ENCODE measurements at regions of chr14 and their contacts with region 1.

Region 1: DNA sequence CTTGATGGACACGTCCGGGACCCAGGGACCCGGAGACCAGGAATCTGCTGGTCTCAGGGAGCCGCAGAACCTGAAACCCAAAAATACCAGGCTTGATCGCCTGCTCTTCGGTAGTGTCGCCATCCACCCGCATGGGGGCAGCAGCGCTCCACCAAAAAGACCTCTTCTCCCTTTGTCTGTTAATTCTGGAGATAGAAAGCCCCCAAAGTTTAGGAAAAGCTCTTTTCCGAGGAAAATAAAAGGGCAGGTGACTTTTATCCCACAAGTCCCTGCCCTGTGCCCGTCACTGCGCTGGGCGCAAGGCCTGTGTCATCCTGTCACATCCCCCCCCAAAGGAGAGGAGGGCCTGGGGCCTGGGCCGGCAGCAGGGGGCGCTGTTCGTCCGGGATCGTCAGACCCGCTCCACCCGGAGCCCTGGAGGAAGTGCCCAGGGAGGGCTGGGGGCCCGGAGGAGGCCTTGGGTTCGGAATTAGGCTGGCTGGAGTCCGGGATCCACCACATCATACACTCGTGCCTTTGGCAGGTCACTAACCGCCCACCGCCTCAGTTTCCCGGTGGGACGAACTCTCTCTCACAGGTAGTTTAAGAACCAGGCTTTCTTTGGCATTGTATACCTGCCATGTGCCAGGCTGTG is 31.9 kb downstream of the DAD1 start:
- DNase-seq: no peak
- H3K4me3 ChIP-seq: peak overlapping the region; percentile 44
- CTCF ChIP-seq: peak; percentile 96

Region 2: GRCh38 chr14:22332686-22333421 is 224.3 kb before region 1 on chr14:
- CTCF ChIA-PET with region 1: no interaction called
- POLR2A ChIA-PET with region 1: no interaction called
- DNase-seq: no peak
- H3K4me3 ChIP-seq: no peak overlapping the region
- CTCF ChIP-seq: no peak

Region 3: DNA sequence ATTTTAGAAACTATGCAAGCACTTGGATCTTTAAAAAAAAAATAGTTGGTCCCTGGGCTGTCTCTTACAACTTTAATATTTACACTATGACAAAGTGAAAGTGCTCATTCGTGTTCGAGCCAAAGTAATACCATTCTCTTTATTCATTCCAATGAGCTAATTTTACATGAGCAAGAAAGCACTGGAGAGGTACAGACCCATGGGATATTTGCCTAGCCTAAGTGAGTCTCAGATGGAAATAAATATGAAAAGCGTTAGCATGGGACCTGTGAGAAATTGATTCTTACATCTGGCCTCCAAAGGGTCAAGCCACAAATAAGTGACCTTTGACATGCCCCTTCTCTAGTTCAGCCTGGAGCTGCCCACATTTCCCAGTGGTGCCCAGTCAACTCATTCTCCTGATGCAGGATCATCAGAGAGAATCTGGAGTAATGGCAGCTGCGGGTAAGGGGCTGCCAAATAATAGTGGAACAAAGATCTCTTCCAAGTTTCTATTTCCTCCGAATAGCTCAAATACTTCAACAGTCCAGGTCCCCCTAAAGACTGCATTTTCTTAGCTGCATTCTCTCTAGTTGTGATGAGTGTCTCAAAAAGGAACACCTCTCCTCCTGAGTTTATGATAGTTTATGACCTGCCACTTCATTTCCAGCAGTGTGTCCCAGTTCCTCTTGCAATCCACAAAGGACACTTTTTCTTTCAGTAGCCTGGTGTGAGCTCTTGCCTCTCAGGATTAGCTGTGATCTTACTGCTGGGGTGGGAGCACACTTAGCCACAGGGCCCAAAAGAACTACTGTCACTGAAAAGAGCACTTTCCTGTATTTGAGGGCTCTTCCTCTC is 176.3 kb before region 1 on chr14:
- CTCF ChIA-PET with region 1: interaction called, 28 read pairs
- POLR2A ChIA-PET with region 1: no interaction called
- DNase-seq: no peak
- H3K4me3 ChIP-seq: peak overlapping the region; percentile 26
- CTCF ChIP-seq: no peak

Region 4: GRCh38 chr14:22536853-22537338 is 20.2 kb before region 1 on chr14:
- CTCF ChIA-PET with region 1: interaction called, 32 read pairs
- POLR2A ChIA-PET with region 1: no interaction called
- DNase-seq: no peak
- H3K4me3 ChIP-seq: no peak overlapping the region
- CTCF ChIP-seq: no peak

Region 5: GRCh38 chr14:22653012-22653621 is 96.0 kb after region 1 on chr14:
- CTCF ChIA-PET with region 1: interaction called, 299 read pairs
- POLR2A ChIA-PET with region 1: interaction called, 3 read pairs
- DNase-seq: no peak
- H3K4me3 ChIP-seq: no peak overlapping the region
- CTCF ChIP-seq: peak; percentile 94

Region 6: DNA sequence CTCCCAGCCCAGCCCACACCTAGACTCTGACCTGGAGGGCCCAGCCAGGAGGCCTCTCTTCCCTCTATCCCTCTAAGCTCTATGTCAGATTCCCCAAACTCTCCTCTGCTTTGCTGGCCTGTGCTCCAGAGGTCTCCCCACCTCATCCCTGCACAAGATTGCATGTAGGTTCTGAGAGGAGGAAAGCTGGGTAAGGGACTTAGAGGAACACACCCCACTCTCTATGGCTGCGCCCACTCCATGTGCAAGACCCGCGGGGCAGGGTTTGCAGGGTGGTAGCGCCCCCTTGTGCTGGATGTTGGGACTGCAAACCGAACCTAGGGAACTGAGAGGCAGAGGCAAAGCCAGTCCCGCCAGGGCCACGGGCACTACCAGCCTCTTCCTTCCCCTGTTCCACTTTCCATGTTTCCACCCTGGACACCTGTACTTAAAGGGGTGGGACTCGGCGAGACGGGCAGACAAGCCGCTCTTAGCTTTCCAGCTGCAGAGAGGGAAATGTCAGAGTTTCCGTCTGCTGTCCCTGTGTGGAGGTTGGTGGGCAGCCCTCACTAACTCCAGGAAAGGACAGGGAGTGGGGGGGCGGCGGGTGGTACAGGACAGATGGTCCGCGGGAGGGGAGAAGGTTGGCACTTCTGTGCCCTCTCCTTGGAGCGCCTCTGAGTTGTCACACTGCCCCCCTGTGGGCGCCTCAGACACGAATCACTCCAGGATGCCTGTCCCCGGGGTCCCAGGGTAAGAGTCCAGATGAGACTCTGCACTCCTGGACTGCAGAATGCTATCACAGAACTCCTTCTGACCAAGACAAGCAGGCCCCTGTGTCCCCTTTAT is 296.0 kb after region 1 on chr14:
- CTCF ChIA-PET with region 1: interaction called, 187 read pairs
- POLR2A ChIA-PET with region 1: interaction called, 6 read pairs
- DNase-seq: no peak
- H3K4me3 ChIP-seq: peak overlapping the region; percentile 59
- CTCF ChIP-seq: peak; percentile 93

Region 7: GRCh38 chr14:22908601-22909000 is 351.5 kb after region 1 on chr14:
- CTCF ChIA-PET with region 1: interaction called, 97 read pairs
- POLR2A ChIA-PET with region 1: no interaction called
- DNase-seq: no peak
- H3K4me3 ChIP-seq: no peak overlapping the region
- CTCF ChIP-seq: no peak

Region 8: GRCh38 chr14:23109769-23110168 is 552.7 kb after region 1 on chr14:
- CTCF ChIA-PET with region 1: interaction called, 12 read pairs
- POLR2A ChIA-PET with region 1: no interaction called
- DNase-seq: no peak
- H3K4me3 ChIP-seq: no peak overlapping the region
- CTCF ChIP-seq: no peak

Measured in AG04449 (cell line).